ENCODE measurements at regions of chr15 and their contacts with region 1.

Region 1: GRCh38 chr15:35810007-35810406 is 264.0 kb upstream of the DPH6 start:
- DNase-seq: no peak
- H3K4me3 ChIP-seq: no peak overlapping the region
- CTCF ChIP-seq: no peak
- POLR2A ChIP-seq: no peak

Region 2: DNA sequence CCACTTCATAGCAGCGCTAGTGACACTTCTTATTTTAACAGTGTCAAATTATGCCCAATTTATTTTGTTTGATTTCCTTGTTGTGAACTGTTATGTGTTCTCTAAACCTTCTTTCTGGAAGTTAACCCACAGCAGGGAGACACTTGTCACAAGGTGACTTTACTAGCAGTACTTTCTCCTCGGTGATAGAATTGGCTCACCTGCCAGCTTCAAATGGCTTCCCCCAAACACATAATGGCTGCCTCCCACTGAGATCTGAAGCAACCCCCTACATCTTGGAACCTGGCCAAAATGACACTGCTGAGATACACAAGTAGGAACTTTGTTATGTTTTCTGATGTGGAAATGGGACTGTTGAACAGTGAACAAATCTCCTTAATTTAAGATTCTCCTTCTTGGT is 25.3 kb before region 1 on chr15:
- intact Hi-C with region 1: loop called (anchors 1 kb)
- DNase-seq: no peak
- H3K4me3 ChIP-seq: no peak overlapping the region
- CTCF ChIP-seq: no peak
- POLR2A ChIP-seq: no peak